PC-3 (cell line): ENCODE measurements at regions of chr6 and their contacts with region 1.

Region 1: GRCh38 chr6:72955666-72956065 is 269.6 kb downstream of the KHDC1L start:
- DNase-seq: no peak
- ATAC-seq: no peak
- H3K4me3 ChIP-seq: no peak overlapping the region
- H3K27ac ChIP-seq: no peak overlapping the region
- H3K4me1 ChIP-seq: peaks cover 32% of the 10 kb centered on the region
- H3K27me3 ChIP-seq: no peaks in the 10 kb centered on the region
- CTCF ChIP-seq: no peak

Region 2: DNA sequence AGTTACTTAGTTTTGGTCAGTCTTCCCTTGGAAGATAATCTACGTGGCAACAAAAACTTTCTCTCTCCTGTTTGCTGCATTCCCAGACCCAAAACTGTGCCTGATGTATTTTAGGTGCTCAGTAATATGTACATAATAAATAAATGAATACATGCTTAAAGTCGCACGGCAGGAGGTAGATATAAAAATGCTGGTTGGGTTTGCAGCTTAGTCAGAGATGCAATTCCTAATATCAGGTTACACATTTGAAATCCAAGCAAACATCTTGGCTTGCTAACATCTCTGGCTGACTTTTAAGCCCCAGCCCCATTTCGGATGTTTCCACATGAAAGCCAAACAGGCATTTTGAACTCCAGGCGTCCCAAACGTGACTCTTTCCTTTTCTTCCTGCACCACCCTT is 242.8 kb before region 1 on chr6:
- CTCF ChIA-PET with region 1: no interaction called
- POLR2A ChIA-PET with region 1: interaction called, 13 read pairs
- intact Hi-C with region 1: no loop called
- DNase-seq: peak; percentile 32
- ATAC-seq: no peak
- H3K4me3 ChIP-seq: no peak overlapping the region
- H3K27ac ChIP-seq: no peak overlapping the region
- H3K4me1 ChIP-seq: no peaks in the 10 kb centered on the region
- H3K27me3 ChIP-seq: no peaks in the 10 kb centered on the region
- CTCF ChIP-seq: no peak

Region 3: GRCh38 chr6:72819609-72820008 is 136.1 kb before region 1 on chr6:
- CTCF ChIA-PET with region 1: no interaction called
- POLR2A ChIA-PET with region 1: no interaction called
- intact Hi-C with region 1: loop called (anchors 5 kb)
- DNase-seq: peak; percentile 48
- ATAC-seq: no peak
- H3K4me3 ChIP-seq: no peak overlapping the region
- H3K27ac ChIP-seq: no peak overlapping the region
- H3K4me1 ChIP-seq: peaks cover 11% of the 10 kb centered on the region
- H3K27me3 ChIP-seq: no peaks in the 10 kb centered on the region
- CTCF ChIP-seq: no peak

Region 4: GRCh38 chr6:73032586-73032985 is 76.9 kb after region 1 on chr6:
- CTCF ChIA-PET with region 1: no interaction called
- POLR2A ChIA-PET with region 1: no interaction called
- intact Hi-C with region 1: no loop called
- DNase-seq: peak; percentile 85
- ATAC-seq: peak; percentile 35
- H3K4me3 ChIP-seq: no peak overlapping the region
- H3K27ac ChIP-seq: peak overlapping the region; percentile 99
- H3K4me1 ChIP-seq: peaks cover 56% of the 10 kb centered on the region
- H3K27me3 ChIP-seq: no peaks in the 10 kb centered on the region
- CTCF ChIP-seq: no peak

Region 5: DNA sequence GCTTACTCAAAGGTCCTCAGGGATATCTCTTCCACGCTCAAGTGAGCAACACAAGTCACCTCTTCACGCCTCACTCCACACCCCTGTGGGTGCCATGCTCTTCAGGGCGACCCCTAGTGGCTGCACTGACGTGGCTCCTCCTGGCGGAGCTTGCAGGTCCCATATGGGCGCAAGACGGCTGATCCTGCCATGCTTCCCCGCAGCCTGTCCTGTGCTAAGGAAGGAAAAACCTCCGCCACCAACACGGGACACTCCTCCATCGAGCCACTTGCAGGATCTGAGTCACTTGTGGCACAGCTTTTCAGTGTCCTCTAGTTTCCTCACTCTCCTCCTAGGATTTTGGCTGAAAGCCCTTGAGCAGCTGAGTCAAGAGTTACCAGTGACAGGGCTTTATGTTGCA is 178.9 kb after region 1 on chr6:
- CTCF ChIA-PET with region 1: no interaction called
- POLR2A ChIA-PET with region 1: no interaction called
- intact Hi-C with region 1: no loop called
- DNase-seq: peak; percentile 27
- ATAC-seq: no peak; the same call in 1 of the 2 replicates
- H3K4me3 ChIP-seq: no peak overlapping the region
- H3K27ac ChIP-seq: no peak overlapping the region
- H3K4me1 ChIP-seq: peaks cover 6% of the 10 kb centered on the region; the same call in 1 of the 2 replicates
- H3K27me3 ChIP-seq: no peaks in the 10 kb centered on the region
- CTCF ChIP-seq: peak; percentile 46